PC-3 (cell line): ENCODE measurements at regions of chr6 and their contacts with region 1.

Region 1: DNA sequence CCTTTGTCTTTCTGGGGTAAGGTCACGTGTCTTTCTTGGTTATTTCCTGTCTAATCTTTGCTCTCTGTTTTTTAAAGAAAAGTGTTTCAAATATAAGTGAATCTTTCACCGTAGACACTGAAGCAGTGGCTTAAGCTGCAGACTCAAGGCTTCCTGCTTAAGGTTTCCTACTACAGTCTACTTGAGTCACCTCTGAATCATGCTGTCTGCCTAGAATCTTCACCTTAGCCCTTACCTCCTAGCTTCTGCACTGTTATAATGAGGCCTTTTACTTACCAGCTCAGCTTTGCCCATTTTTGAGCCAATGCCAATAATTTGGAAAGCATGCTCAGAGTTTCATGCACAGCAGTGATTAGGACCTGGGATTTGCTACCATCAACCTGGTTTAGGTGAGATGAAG is 30.6 kb downstream of the ADGRF4 start:
- DNase-seq: peak; percentile 90
- ATAC-seq: peak; percentile 78
- H3K4me3 ChIP-seq: no peak overlapping the region
- H3K27ac ChIP-seq: peak overlapping the region; percentile 93
- H3K4me1 ChIP-seq: peaks cover 52% of the 10 kb centered on the region
- H3K27me3 ChIP-seq: no peaks in the 10 kb centered on the region
- CTCF ChIP-seq: no peak

Region 2: GRCh38 chr6:47535316-47536225 is 193.4 kb before region 1 on chr6:
- CTCF ChIA-PET with region 1: no interaction called
- POLR2A ChIA-PET with region 1: no interaction called
- intact Hi-C with region 1: no loop called
- DNase-seq: no peak
- ATAC-seq: no peak
- H3K4me3 ChIP-seq: no peak overlapping the region
- H3K27ac ChIP-seq: no peak overlapping the region
- H3K4me1 ChIP-seq: no peaks in the 10 kb centered on the region
- H3K27me3 ChIP-seq: no peaks in the 10 kb centered on the region
- CTCF ChIP-seq: no peak

Region 3: GRCh38 chr6:47655719-47656595 is 73.1 kb before region 1 on chr6:
- CTCF ChIA-PET with region 1: no interaction called
- POLR2A ChIA-PET with region 1: no interaction called
- intact Hi-C with region 1: loop called (anchors 2 kb)
- DNase-seq: peak; percentile 91
- ATAC-seq: peak; percentile 97
- H3K4me3 ChIP-seq: no peak overlapping the region
- H3K27ac ChIP-seq: peak overlapping the region; percentile 57
- H3K4me1 ChIP-seq: peaks cover 40% of the 10 kb centered on the region
- H3K27me3 ChIP-seq: no peaks in the 10 kb centered on the region
- CTCF ChIP-seq: no peak

Region 4: DNA sequence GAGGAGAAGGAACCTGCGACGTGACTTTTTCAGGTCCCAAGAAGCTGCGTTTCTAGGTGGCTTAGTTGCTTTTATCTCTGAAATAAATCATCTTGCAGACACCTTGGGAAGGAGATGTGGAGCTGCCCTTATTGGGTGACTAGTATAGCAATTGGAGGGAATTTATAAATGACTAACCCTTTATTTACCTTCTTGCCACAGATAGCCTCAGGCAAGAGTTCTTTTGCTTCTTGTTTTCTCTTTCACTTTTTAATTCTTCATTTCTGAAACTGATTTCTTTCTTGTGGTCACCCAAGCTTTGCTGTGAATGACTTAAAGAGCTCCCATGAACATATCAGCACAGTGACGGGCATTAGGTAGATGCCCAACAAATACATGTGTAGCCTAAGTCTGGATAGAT is 27.7 kb before region 1 on chr6:
- CTCF ChIA-PET with region 1: no interaction called
- POLR2A ChIA-PET with region 1: interaction called, 4 read pairs
- intact Hi-C with region 1: loop called (anchors 1 kb)
- DNase-seq: peak; percentile 90
- ATAC-seq: peak; percentile 54
- H3K4me3 ChIP-seq: peak overlapping the region; percentile 31; the same call in 1 of the 2 replicates
- H3K27ac ChIP-seq: peak overlapping the region; percentile 95
- H3K4me1 ChIP-seq: peaks cover 50% of the 10 kb centered on the region
- H3K27me3 ChIP-seq: no peaks in the 10 kb centered on the region
- CTCF ChIP-seq: no peak